Psoas muscle (tissue), 8 donors: ENCODE measurements at regions of chr12 and their contacts with region 1.

Region 1: GRCh38 chr12:52278541-52279421 is 4.3 kb downstream of the KRT86 start:
- DNase-seq: peak; percentile 76 to 86
- ATAC-seq: peak; percentile 89 to 99 (median 94)
- H3K4me3 ChIP-seq: no peak overlapping the region
- H3K27ac ChIP-seq: no peak overlapping the region
- H3K4me1 ChIP-seq: peaks cover 7% of the 10 kb centered on the region
- H3K27me3 ChIP-seq: peaks cover 0 to 6% (median 0%) of the 10 kb centered on the region in 3 donors
- CTCF ChIP-seq: peak; percentile 96

Region 2: DNA sequence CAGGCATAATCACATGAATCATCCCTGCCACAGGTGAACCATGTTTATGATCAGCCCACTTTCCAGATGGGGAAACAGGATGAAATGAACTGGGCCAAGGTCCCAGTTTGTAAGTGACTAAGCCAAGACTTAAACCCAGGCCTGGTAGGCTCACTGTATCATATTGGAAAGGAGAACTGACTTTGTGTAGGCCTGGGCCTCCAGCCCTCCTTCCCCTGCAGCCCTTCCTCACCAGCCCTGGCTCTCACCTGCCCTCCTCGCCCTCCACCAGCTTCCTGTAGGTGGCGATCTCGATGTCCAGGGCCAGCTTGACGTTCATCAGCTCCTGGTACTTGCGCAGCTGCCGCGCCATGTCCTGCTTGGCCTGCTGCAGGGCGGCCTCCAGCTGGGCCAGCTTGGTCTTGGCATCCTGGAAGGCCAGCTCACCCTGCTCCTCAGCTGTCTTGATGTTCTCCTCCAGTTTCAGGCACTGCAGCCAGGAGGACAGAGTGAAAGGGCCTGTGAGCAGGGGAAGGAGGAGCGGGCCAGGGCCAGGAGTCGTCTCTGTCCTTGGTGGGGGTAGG is 106.8 kb before region 1 on chr12:
- intact Hi-C with region 1: no loop called
- DNase-seq: peak; percentile 69 to 73
- ATAC-seq: peak; percentile 80 to 90 (median 86)
- H3K4me3 ChIP-seq: no peak overlapping the region
- H3K27ac ChIP-seq: no peak overlapping the region
- H3K4me1 ChIP-seq: peaks cover 7% of the 10 kb centered on the region
- H3K27me3 ChIP-seq: no peaks in the 10 kb centered on the region
- CTCF ChIP-seq: peak; percentile 31

Region 3: DNA sequence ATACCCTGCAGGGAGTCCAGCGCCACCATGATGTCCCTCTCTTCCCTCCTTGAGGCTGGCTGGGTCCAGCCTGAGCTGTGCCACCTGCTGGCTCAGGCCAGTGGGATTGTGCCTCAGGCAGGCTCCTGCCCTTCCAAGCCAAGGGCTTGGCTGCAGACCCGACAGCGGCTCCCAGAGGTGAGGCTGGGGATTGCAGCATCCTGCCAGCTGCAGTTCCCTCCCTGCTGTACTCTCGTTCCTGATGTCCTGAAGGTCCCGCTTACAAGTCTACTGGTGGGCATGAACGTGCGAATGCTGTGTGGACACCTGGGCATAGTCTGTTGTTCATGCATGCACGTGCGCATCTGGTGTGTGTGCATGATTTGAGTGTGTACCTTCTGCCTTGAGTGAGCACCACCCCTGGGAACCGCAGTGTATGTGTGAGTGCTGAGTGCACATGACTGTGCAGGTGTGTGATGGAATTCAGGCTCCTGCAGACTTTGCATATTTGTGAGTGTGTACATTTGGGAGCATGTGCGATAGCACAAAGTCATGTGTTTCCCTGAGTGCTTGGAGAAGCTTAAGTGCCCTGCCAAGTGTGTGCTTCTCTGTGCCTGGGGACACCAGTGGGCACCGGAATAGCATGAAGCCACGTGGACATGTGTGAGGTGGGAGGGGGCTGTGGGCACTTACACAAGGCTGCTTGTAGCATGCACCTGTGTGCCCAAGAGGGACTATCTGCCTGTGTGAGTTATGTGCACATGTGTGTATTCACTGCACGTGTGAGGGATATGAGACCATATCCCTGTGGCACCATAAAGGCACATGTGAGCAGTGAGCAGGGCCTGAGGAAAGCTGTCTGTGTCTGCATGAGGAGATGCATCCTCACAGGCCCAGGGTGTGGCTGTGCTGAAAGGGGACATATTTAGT is 65.0 kb before region 1 on chr12:
- intact Hi-C with region 1: loop called in 1 of 2 experiments (anchors 5 kb)
- DNase-seq: peak; percentile 76 to 88
- ATAC-seq: peak; percentile 94 to 96 (median 96)
- H3K4me3 ChIP-seq: no peak overlapping the region
- H3K27ac ChIP-seq: no peak overlapping the region
- H3K4me1 ChIP-seq: peaks cover 4% of the 10 kb centered on the region
- H3K27me3 ChIP-seq: peaks cover 0 to 4% (median 0%) of the 10 kb centered on the region in 3 donors
- CTCF ChIP-seq: peak; percentile 95

Region 4: GRCh38 chr12:52221912-52222457 is 56.8 kb before region 1 on chr12:
- intact Hi-C with region 1: loop called in 1 of 2 experiments (anchors 5 kb)
- DNase-seq: peak; percentile 69 to 81
- ATAC-seq: peak; percentile 46 to 88 (median 83)
- H3K4me3 ChIP-seq: no peak overlapping the region
- H3K27ac ChIP-seq: no peak overlapping the region
- H3K4me1 ChIP-seq: peaks cover 4% of the 10 kb centered on the region
- H3K27me3 ChIP-seq: peaks cover 0 to 27% (median 0%) of the 10 kb centered on the region in 3 donors
- CTCF ChIP-seq: peak; percentile 44

Region 5: DNA sequence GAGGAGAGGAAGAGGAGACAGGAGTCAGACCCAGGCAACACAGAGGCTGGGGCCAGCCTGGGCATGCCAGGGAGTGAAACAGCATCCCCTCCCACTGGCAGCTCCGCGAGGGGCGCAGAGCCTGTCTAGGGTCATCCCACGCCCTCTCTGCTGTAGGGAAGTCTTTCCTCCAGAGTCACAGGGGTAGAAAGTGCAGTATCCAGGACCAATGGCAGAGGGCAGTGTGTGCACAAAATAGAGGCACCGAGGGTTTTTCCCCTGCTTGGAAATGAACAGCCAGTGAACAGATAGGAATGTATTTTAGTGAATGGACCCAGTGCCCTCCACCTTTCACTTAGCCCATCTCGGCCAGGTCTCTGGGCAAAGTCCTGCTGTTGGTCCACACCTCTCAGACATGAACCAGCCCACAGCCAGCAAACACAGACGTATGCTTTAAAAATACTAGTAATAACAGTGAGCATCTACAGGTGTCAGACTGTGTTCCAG is 304.2 kb after region 1 on chr12:
- intact Hi-C with region 1: no loop called
- DNase-seq: peak in 1 of 2 donors; percentile 16
- ATAC-seq: peak in 3 of 4 donors; percentile 46 to 61 (median 49)
- H3K4me3 ChIP-seq: no peak overlapping the region
- H3K27ac ChIP-seq: no peak overlapping the region
- H3K4me1 ChIP-seq: no peaks in the 10 kb centered on the region
- H3K27me3 ChIP-seq: peaks cover 0 to 4% (median 0%) of the 10 kb centered on the region in 3 donors
- CTCF ChIP-seq: peak; percentile 51